ENCODE measurements at regions of chr20 and their contacts with region 1.

Region 1: DNA sequence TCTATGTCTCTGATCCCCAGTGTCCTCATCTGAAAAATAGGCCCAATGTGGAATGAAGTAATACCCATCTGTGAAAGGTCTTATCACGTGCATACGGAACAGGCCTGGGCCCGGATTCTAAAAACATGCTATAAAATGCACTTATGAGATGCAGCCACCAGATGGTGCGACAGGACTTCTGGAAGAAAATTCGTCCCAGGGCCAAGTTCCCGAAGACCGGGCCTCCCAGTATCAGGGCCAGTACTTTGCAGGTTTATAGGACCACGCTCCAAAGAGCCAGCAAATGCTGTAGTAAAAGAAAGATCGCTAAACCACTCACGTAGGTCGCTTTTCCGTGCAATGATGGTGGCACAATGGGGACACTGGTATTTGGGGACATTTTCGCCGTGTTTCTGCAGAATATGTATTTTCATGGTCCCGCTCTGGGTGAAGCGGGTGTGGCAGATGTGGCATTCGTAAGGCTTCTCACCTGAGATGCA is 10.6 kb downstream of the CTCFL start:
- DNase-seq: peak; percentile 68 to 73
- ATAC-seq: peak; percentile 74 to 88; a peak in 5 of 6 replicates
- H3K4me3 ChIP-seq: no peak overlapping the region
- H3K27ac ChIP-seq: no peak overlapping the region
- H3K4me1 ChIP-seq: no peaks in the 10 kb centered on the region
- CTCF ChIP-seq: peak; percentile 90
- EP300 ChIP-seq: no peak
- POLR2A ChIP-seq: no peak
- RAD21 ChIP-seq: peak; percentile 97 to 98

Region 2: GRCh38 chr20:57369596-57370325 is 144.6 kb before region 1 on chr20:
- CTCF ChIA-PET with region 1: no interaction called
- POLR2A ChIA-PET with region 1: no interaction called
- DNase-seq: no peak
- ATAC-seq: no peak
- H3K4me3 ChIP-seq: no peak overlapping the region
- H3K27ac ChIP-seq: no peak overlapping the region
- H3K4me1 ChIP-seq: no peaks in the 10 kb centered on the region
- CTCF ChIP-seq: no peak
- EP300 ChIP-seq: no peak
- POLR2A ChIP-seq: no peak
- RAD21 ChIP-seq: no peak

Region 3: DNA sequence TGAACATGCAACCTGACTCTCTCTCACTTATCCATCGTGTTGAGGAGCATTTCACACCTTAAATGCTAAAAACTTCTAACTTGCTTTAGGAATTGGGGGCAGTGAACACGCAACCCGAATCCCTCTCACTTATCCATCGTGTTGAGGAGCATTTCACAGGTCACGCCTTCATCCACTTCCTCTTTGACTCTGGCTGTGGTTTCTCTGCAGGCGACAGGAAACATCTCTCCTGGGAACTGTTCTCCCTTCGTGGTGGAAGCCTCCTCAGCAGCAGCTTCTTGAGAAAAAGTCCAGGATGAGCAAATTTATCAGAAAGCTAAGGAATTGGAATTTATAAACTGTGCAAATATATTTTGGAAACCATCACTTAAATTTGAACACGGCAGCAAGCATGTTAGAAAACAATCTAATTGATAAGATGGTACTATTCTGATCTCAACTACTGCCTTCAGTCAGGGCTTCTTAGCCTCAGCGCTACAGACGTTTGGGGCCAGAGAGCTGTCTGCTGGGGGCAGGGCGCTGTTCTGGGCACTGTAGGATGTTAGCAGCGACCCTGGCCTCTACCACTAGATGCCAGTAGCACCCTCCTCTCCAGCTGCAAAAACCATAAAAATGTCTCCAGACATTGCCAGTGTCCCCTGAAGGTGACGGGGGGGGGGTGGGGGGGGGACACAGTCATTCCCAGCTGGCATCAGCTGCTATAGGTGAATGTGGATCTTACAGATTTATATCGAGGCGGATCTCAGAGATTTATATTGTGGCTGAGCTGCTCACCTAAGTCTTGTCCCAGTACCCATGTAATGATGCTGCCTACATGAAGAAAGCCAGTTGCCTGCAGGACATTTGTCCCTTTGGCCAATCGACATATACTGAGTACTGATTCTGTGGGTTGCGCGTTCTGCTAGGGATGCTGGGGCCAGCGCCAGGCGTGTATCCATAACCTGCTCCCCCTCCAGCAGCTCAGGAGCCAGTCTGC is 15.6 kb before region 1 on chr20:
- CTCF ChIA-PET with region 1: interaction called, 24 read pairs
- POLR2A ChIA-PET with region 1: no interaction called
- DNase-seq: peak in 1 of 2 experiments; percentile 40
- ATAC-seq: peak; percentile 84 to 89
- H3K4me3 ChIP-seq: no peak overlapping the region
- H3K27ac ChIP-seq: no peak overlapping the region
- H3K4me1 ChIP-seq: no peaks in the 10 kb centered on the region
- CTCF ChIP-seq: peak; percentile 45
- EP300 ChIP-seq: no peak
- POLR2A ChIP-seq: no peak
- RAD21 ChIP-seq: peak; percentile 54 to 56

Region 4: GRCh38 chr20:57526087-57526884 is 12.0 kb after region 1 on chr20:
- CTCF ChIA-PET with region 1: interaction called, 14 read pairs
- POLR2A ChIA-PET with region 1: no interaction called
- DNase-seq: peak in 1 of 2 experiments; percentile 42
- ATAC-seq: peak in 1 of 2 experiments; percentile 74; a peak in 3 of 6 replicates
- H3K4me3 ChIP-seq: no peak overlapping the region
- H3K27ac ChIP-seq: peak overlapping the region in 1 of 2 experiments; percentile 16; a peak in 1 of 6 replicates
- H3K4me1 ChIP-seq: peaks cover 6% of the 10 kb centered on the region; the same call in 1 of the 3 replicates
- CTCF ChIP-seq: peak; percentile 15; the same call in 1 of the 3 replicates
- EP300 ChIP-seq: no peak
- POLR2A ChIP-seq: no peak
- RAD21 ChIP-seq: no peak

Region 5: DNA sequence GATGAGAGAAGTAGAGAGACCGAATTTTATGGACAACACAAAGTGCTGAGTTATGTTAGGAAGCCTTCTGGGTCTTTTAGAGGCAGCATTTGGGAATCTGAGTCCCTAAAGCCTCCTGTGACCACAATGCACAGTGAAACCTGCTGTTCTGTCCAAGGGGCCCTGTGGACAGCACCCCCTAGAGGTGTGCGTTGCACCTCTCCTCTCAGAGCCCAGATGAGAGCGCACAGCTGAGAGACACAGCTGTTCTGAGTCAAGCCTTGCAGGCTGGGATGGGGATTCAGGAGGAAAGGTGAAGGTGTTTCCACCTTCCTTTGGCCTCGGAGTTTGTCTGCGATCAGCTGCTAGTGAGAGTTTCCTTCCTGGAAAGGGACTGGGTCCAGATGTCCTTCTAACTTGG is 59.6 kb after region 1 on chr20:
- CTCF ChIA-PET with region 1: interaction called, 117 read pairs
- POLR2A ChIA-PET with region 1: no interaction called
- DNase-seq: peak in 1 of 2 experiments; percentile 23
- ATAC-seq: peak; percentile 46 to 71; a peak in 4 of 6 replicates
- H3K4me3 ChIP-seq: no peak overlapping the region
- H3K27ac ChIP-seq: no peak overlapping the region
- H3K4me1 ChIP-seq: no peaks in the 10 kb centered on the region
- CTCF ChIP-seq: no peak; the same call in 2 of the 3 replicates
- EP300 ChIP-seq: no peak
- POLR2A ChIP-seq: no peak
- RAD21 ChIP-seq: no peak

Region 6: GRCh38 chr20:57582432-57583305 is 68.4 kb after region 1 on chr20:
- CTCF ChIA-PET with region 1: interaction called, 117 read pairs
- POLR2A ChIA-PET with region 1: no interaction called
- DNase-seq: peak in 1 of 2 experiments; percentile 24
- ATAC-seq: peak; percentile 38 to 79; a peak in 4 of 6 replicates
- H3K4me3 ChIP-seq: peak overlapping the region; percentile 34; the same call in 2 of the 3 replicates
- H3K27ac ChIP-seq: peak overlapping the region; percentile 30 to 40; a peak in 3 of 6 replicates
- H3K4me1 ChIP-seq: peaks cover 14% of the 10 kb centered on the region
- CTCF ChIP-seq: peak; percentile 45
- EP300 ChIP-seq: no peak
- POLR2A ChIP-seq: no peak
- RAD21 ChIP-seq: peak in 1 of 2 experiments; percentile 17; a peak in 1 of 5 replicates

Region 7: GRCh38 chr20:57879779-57880570 is 365.7 kb after region 1 on chr20:
- CTCF ChIA-PET with region 1: no interaction called
- POLR2A ChIA-PET with region 1: no interaction called
- DNase-seq: no peak
- ATAC-seq: no peak
- H3K4me3 ChIP-seq: no peak overlapping the region
- H3K27ac ChIP-seq: peak overlapping the region in 1 of 2 experiments; percentile 36; a peak in 1 of 6 replicates
- H3K4me1 ChIP-seq: peaks cover 11% of the 10 kb centered on the region
- CTCF ChIP-seq: no peak
- EP300 ChIP-seq: no peak
- POLR2A ChIP-seq: no peak
- RAD21 ChIP-seq: no peak

Measured in A549 (cell line).